ENCODE measurements at regions of chr9 and their contacts with region 1.

Region 1: DNA sequence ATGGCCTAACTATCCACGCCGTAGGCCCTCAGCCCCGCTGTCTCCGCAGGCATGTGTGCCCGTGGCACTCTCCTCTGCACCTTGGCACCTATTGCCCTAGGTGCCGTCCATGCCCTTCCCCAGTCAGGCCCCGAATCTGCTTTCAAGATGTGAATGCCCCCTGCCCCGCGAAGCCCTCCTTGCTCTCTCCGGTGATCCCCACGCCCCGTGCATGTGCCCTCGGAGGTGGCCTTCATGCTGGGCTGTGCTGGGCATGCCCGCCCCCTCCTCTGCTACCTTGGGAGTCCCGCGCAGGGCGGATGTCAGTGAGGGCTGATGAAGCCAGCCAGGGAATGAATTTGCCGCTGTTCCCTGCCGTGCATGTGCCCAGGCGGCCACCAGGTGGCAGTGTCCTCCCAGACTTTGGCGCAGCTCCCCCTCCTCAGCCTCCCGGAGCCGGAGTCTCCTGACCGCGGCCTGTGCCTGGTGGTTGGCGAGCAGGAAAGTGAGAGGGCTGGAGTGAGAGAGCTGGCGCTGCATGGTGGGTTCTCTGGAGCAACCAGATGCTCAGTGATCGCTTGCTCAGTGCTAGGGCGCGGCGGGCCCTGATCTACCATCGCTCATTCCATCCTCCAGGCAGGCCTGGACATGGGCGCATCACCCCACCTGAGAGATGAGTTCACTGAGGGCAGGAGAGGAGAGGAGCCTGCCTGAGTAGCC is 112.9 kb upstream of the LMX1B start:
- DNase-seq: peak; percentile 84
- ATAC-seq: peak; percentile 77
- H3K4me3 ChIP-seq: no peak overlapping the region
- H3K4me3 Mint-ChIP-seq: peak overlapping the region; percentile 70
- H3K27ac ChIP-seq: no peak overlapping the region
- H3K27ac Mint-ChIP-seq: peak overlapping the region; percentile 67
- H3K4me1 ChIP-seq: peaks cover 14 to 21% of the 10 kb centered on the region in 2 donors
- H3K4me1 Mint-ChIP-seq: peaks cover 12% of the 10 kb centered on the region
- H3K27me3 ChIP-seq: peaks cover 0 to 35% (median 11%) of the 10 kb centered on the region in 4 experiments
- H3K27me3 Mint-ChIP-seq: peaks cover 11% of the 10 kb centered on the region
- CTCF ChIP-seq: peak; percentile 98

Region 2: GRCh38 chr9:126375386-126375785 is 125.4 kb before region 1 on chr9:
- CTCF ChIA-PET with region 1: no interaction called
- POLR2A ChIA-PET with region 1: no interaction called
- intact Hi-C with region 1: no loop called
- DNase-seq: no peak
- ATAC-seq: no peak
- H3K4me3 ChIP-seq: no peak overlapping the region
- H3K4me3 Mint-ChIP-seq: no peak overlapping the region
- H3K27ac ChIP-seq: no peak overlapping the region
- H3K27ac Mint-ChIP-seq: no peak overlapping the region
- H3K4me1 ChIP-seq: peaks cover 0 to 4% of the 10 kb centered on the region in 2 donors
- H3K4me1 Mint-ChIP-seq: peaks cover 6% of the 10 kb centered on the region
- H3K27me3 ChIP-seq: no peaks in the 10 kb centered on the region
- H3K27me3 Mint-ChIP-seq: peaks cover 31% of the 10 kb centered on the region
- CTCF ChIP-seq: no peak

Region 3: DNA sequence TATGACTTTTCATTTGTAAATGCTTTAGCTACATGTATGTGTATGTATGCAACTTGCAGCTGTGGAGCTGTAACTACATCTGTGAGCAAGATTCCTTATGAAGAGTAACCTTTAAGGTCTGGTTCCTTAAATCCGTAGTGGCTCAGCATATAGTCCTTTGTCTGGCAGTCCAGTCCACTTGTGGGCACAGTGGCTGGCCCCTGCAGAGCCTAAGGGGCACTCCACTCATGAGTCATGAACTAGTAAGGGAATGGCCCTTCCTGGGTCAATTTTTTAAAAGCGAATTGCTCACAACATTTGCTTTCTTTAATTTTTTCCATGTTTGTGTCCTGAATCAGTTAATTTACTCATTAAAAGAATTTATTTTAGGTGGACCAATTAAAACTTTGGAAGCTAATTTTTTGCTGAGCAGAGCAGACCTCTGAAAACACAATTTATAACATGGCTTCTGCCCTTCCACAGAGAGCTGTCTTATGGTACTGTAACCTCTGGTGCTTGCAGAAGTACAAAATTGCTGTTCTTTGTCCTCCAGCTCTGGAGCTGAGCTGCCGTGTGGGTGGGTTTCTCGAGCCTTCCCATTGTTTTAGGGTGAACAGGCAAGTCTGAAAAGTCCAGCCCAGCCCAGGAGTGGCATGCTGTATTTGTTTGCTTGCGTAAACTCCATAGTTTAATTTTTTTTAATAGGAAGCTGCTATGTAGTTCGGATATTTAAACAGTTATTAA is 64.1 kb before region 1 on chr9:
- CTCF ChIA-PET with region 1: no interaction called
- POLR2A ChIA-PET with region 1: no interaction called
- intact Hi-C with region 1: no loop called
- DNase-seq: no peak
- ATAC-seq: no peak
- H3K4me3 ChIP-seq: no peak overlapping the region
- H3K4me3 Mint-ChIP-seq: no peak overlapping the region
- H3K27ac ChIP-seq: no peak overlapping the region
- H3K27ac Mint-ChIP-seq: no peak overlapping the region
- H3K4me1 ChIP-seq: no peaks in the 10 kb centered on the region
- H3K4me1 Mint-ChIP-seq: no peaks in the 10 kb centered on the region
- H3K27me3 ChIP-seq: no peaks in the 10 kb centered on the region
- H3K27me3 Mint-ChIP-seq: no peaks in the 10 kb centered on the region
- CTCF ChIP-seq: no peak

Region 4: DNA sequence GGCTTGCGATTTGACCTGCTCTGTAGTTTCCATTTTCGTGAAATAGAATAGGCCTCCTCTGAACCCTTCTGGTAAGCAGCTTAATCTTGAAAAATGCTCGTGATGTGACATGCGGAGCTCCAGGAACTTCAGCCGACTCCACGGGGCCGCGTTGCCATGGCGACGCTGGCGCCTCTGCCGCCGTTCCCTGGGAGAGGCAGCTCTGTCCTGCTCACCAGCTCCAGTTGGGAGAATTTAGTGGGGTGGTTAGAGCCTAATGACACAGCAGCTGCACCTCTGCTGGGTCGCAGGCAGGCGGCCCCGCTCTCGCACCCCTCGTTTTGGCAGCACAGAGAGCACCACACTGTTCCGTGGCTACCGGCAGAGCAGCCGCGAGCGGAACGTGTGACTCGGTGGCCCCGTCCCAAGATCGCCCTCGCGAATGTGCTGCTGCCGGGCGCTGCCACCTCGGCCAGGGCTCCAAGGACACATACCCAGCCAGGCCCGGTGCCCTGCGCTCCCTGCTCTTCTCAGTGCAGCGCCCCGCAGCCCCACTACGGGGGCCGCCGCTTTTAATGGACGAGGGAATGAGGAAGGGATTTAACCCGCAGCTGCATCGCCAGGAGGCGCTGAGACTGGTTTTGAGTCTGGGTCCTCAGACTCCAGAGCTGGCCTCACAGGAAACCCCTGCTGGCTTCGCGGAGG is 18.3 kb before region 1 on chr9:
- CTCF ChIA-PET with region 1: interaction called, 14 read pairs
- POLR2A ChIA-PET with region 1: no interaction called
- intact Hi-C with region 1: no loop called
- DNase-seq: no peak
- ATAC-seq: peak; percentile 17
- H3K4me3 ChIP-seq: no peak overlapping the region
- H3K4me3 Mint-ChIP-seq: peak overlapping the region; percentile 23
- H3K27ac ChIP-seq: no peak overlapping the region
- H3K27ac Mint-ChIP-seq: no peak overlapping the region
- H3K4me1 ChIP-seq: peaks cover 7 to 19% of the 10 kb centered on the region in 2 donors
- H3K4me1 Mint-ChIP-seq: peaks cover 16% of the 10 kb centered on the region
- H3K27me3 ChIP-seq: no peaks in the 10 kb centered on the region
- H3K27me3 Mint-ChIP-seq: peaks cover 7% of the 10 kb centered on the region
- CTCF ChIP-seq: no peak

Region 5: GRCh38 chr9:126523611-126524111 is 22.8 kb after region 1 on chr9:
- CTCF ChIA-PET with region 1: interaction called, 33 read pairs
- POLR2A ChIA-PET with region 1: no interaction called
- intact Hi-C with region 1: no loop called
- DNase-seq: peak; percentile 41
- ATAC-seq: peak; percentile 61
- H3K4me3 ChIP-seq: peak overlapping the region in 3 of 5 experiments; percentile 21 to 61 (median 48)
- H3K4me3 Mint-ChIP-seq: peak overlapping the region; percentile 88
- H3K27ac ChIP-seq: no peak overlapping the region
- H3K27ac Mint-ChIP-seq: peak overlapping the region; percentile 77
- H3K4me1 ChIP-seq: peaks cover 11 to 16% of the 10 kb centered on the region in 2 donors
- H3K4me1 Mint-ChIP-seq: peaks cover 20% of the 10 kb centered on the region
- H3K27me3 ChIP-seq: peaks cover 0 to 22% (median 7%) of the 10 kb centered on the region in 4 experiments
- H3K27me3 Mint-ChIP-seq: peaks cover 22% of the 10 kb centered on the region
- CTCF ChIP-seq: no peak

Region 6: GRCh38 chr9:126538550-126538949 is 37.7 kb after region 1 on chr9:
- CTCF ChIA-PET with region 1: interaction called, 27 read pairs
- POLR2A ChIA-PET with region 1: no interaction called
- intact Hi-C with region 1: no loop called
- DNase-seq: no peak
- ATAC-seq: no peak
- H3K4me3 ChIP-seq: no peak overlapping the region
- H3K4me3 Mint-ChIP-seq: no peak overlapping the region
- H3K27ac ChIP-seq: no peak overlapping the region
- H3K27ac Mint-ChIP-seq: no peak overlapping the region
- H3K4me1 ChIP-seq: peaks cover 17 to 31% of the 10 kb centered on the region in 2 donors
- H3K4me1 Mint-ChIP-seq: peaks cover 22% of the 10 kb centered on the region
- H3K27me3 ChIP-seq: no peaks in the 10 kb centered on the region
- H3K27me3 Mint-ChIP-seq: no peaks in the 10 kb centered on the region
- CTCF ChIP-seq: no peak

Region 7: GRCh38 chr9:126564711-126565110 is 63.9 kb after region 1 on chr9:
- CTCF ChIA-PET with region 1: interaction called, 167 read pairs
- POLR2A ChIA-PET with region 1: no interaction called
- intact Hi-C with region 1: no loop called
- DNase-seq: no peak
- ATAC-seq: no peak
- H3K4me3 ChIP-seq: no peak overlapping the region
- H3K4me3 Mint-ChIP-seq: no peak overlapping the region
- H3K27ac ChIP-seq: no peak overlapping the region
- H3K27ac Mint-ChIP-seq: no peak overlapping the region
- H3K4me1 ChIP-seq: no peaks in the 10 kb centered on the region
- H3K4me1 Mint-ChIP-seq: no peaks in the 10 kb centered on the region
- H3K27me3 ChIP-seq: peaks cover 0 to 40% (median 9%) of the 10 kb centered on the region in 4 experiments
- H3K27me3 Mint-ChIP-seq: peaks cover 38% of the 10 kb centered on the region
- CTCF ChIP-seq: peak; percentile 14

Measured in B cell (primary cell).